HepG2 (cell line): ENCODE measurements at regions of chr2 and their contacts with region 1.

Region 1: GRCh38 chr2:63827749-63828148 is 13.9 kb upstream of the UGP2 start:
- DNase-seq: peak; percentile 92
- ATAC-seq: peak; percentile 97
- H3K4me3 ChIP-seq: no peak overlapping the region
- H3K27ac ChIP-seq: no peak overlapping the region
- H3K4me1 ChIP-seq: peaks cover 15% of the 10 kb centered on the region
- H3K27me3 ChIP-seq: no peaks in the 10 kb centered on the region
- CTCF ChIP-seq: no peak
- EP300 ChIP-seq: peak in 1 of 2 experiments; percentile 86; a peak in 2 of 4 replicates
- POLR2A ChIP-seq: no peak
- RAD21 ChIP-seq: no peak

Region 2: DNA sequence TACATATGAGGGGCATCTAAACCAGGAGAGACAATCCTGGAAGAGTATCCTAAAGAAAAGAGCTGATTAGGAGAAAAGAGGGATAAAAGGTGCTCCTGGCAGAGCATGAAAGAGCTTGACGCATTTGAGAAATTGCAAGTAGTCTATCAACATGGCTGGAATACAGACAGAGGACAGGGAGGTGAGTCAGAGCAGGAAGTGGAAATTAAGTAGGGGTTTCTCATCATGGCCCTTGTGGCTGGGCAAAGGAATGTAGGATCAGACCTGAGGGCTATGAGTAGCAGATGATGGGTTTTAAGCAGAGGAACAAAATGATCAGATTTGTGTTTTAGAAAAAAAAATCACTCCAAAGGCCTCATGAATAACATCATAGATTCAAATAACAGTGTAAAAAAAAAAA is 35.2 kb before region 1 on chr2:
- CTCF ChIA-PET with region 1: no interaction called
- POLR2A ChIA-PET with region 1: no interaction called
- in situ Hi-C with region 1: no loop called
- intact Hi-C with region 1: loop called (anchors 1 kb)
- DNase-seq: no peak
- ATAC-seq: no peak
- H3K4me3 ChIP-seq: no peak overlapping the region
- H3K27ac ChIP-seq: no peak overlapping the region
- H3K4me1 ChIP-seq: no peaks in the 10 kb centered on the region
- H3K27me3 ChIP-seq: no peaks in the 10 kb centered on the region
- CTCF ChIP-seq: no peak
- EP300 ChIP-seq: no peak
- POLR2A ChIP-seq: no peak
- RAD21 ChIP-seq: no peak

Region 3: DNA sequence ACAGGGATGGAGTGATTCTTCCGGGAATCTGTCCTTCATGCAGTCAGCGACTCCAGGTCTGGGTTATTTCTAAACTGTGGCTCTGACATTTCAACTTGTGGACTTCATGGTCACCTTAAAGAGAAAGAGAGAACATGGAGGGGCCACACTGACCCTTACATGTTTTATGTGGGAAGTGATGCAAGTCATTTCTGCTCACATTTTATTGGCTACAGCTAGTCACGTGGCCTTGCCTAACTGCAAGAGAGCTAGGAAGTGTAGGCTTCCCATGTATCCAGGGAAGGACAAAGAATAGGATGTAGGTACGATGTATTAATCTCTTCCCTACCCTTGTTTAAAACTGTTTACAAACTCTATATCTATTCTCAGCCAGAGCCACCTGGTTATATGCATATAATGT is 666.0 kb after region 1 on chr2:
- CTCF ChIA-PET with region 1: no interaction called
- POLR2A ChIA-PET with region 1: no interaction called
- in situ Hi-C with region 1: no loop called
- intact Hi-C with region 1: no loop called
- DNase-seq: no peak
- ATAC-seq: no peak
- H3K4me3 ChIP-seq: no peak overlapping the region
- H3K27ac ChIP-seq: no peak overlapping the region
- H3K4me1 ChIP-seq: no peaks in the 10 kb centered on the region
- H3K27me3 ChIP-seq: peaks cover 0 to 39% of the 10 kb centered on the region in 2 experiments; a peak in 2 of 5 replicates
- CTCF ChIP-seq: no peak
- EP300 ChIP-seq: no peak
- POLR2A ChIP-seq: no peak
- RAD21 ChIP-seq: no peak